Heart left ventricle (tissue), 16 donors: ENCODE measurements at regions of chr19 and their contacts with region 1.

Region 1: DNA sequence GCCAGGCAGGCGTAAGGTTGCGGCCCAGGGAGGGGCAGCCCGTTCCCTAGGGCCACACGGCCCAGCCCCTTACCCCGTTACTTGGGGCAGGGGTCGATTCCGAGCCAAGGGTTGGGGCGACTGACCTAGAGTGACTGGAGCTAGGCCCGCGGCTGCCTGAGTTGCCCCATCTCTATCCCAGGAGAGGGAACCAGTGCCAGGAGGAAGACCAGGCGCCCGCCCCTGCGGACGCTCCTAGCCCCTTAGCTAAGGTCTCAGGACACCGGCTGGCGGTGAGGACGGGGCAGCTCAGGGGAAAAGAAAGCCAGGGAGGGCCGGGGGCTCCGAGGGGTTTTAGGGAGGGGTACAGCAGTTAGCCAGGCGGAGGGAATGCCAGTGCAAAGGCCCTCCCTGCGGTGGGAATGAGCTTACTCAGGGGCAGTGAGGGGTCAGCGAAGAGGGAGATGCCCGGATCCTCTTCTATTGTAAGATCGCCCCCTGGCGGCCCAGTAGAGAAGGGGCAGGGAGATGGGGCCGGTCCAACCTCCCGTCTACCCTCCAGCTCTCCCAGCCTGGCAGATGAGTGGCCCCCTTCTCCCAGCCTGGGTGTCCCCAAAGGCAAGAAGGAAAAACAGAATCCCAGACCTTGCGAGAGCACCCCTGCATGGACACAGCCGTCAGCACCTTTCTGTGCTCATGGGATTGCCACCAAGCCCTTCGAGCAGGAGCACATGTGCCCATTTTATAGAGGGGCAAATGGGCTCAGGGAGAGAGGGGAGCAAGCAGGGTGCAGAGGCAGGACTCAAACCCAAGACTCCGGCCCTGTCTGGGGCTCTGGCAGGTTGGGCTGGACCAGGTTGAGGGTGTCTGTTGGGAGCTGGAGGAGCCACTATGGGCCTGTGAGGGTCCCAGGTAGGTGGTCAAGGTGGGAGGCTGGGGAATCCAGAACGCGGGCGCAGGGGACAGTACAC is 16.3 kb downstream of the CILP2 start:
- DNase-seq: peak in 2 of 5 donors; percentile 51 to 58
- ATAC-seq: peak in 3 of 4 donors; percentile 48 to 63 (median 48)
- H3K4me3 ChIP-seq: no peak overlapping the region
- H3K27ac ChIP-seq: no peak overlapping the region
- H3K4me1 ChIP-seq: peaks cover 0 to 9% (median 0%) of the 10 kb centered on the region in 12 donors
- H3K27me3 ChIP-seq: peaks cover 0 to 18% (median 0%) of the 10 kb centered on the region in 9 donors
- CTCF ChIP-seq: peak; percentile 58 to 88 (median 72)
- POLR2A ChIP-seq: no peak

Region 2: GRCh38 chr19:19578252-19578651 is 23.9 kb after region 1 on chr19:
- intact Hi-C with region 1: no loop called
- DNase-seq: no peak
- ATAC-seq: no peak
- H3K4me3 ChIP-seq: no peak overlapping the region
- H3K27ac ChIP-seq: no peak overlapping the region
- H3K4me1 ChIP-seq: no peaks in the 10 kb centered on the region
- H3K27me3 ChIP-seq: no peaks in the 10 kb centered on the region
- CTCF ChIP-seq: no peak
- POLR2A ChIP-seq: no peak

Region 3: DNA sequence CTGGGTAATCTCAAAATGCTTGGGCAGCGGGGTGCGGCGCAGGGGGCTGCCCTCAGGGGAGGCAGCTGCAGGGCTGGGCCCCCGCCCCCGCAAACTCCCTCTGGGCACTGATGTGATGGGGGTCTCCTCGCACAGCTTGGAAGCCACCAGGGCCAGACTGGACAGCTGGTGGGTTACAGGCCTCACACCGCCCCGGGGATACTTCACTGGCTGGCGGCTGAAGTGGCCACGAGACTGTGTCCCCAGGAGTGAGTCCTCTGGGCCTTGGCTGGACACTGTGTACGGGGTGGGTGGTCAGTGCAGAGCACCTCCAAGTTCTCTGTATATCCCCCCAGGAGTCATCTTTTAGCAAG is 75.7 kb after region 1 on chr19:
- intact Hi-C with region 1: loop called in 1 of 10 experiments (anchors 5 kb)
- DNase-seq: no peak
- ATAC-seq: no peak
- H3K4me3 ChIP-seq: no peak overlapping the region
- H3K27ac ChIP-seq: no peak overlapping the region
- H3K4me1 ChIP-seq: peaks cover 0 to 16% (median 10%) of the 10 kb centered on the region in 12 donors
- H3K27me3 ChIP-seq: peaks cover 0 to 27% (median 10%) of the 10 kb centered on the region in 9 donors
- CTCF ChIP-seq: no peak
- POLR2A ChIP-seq: no peak

Region 4: DNA sequence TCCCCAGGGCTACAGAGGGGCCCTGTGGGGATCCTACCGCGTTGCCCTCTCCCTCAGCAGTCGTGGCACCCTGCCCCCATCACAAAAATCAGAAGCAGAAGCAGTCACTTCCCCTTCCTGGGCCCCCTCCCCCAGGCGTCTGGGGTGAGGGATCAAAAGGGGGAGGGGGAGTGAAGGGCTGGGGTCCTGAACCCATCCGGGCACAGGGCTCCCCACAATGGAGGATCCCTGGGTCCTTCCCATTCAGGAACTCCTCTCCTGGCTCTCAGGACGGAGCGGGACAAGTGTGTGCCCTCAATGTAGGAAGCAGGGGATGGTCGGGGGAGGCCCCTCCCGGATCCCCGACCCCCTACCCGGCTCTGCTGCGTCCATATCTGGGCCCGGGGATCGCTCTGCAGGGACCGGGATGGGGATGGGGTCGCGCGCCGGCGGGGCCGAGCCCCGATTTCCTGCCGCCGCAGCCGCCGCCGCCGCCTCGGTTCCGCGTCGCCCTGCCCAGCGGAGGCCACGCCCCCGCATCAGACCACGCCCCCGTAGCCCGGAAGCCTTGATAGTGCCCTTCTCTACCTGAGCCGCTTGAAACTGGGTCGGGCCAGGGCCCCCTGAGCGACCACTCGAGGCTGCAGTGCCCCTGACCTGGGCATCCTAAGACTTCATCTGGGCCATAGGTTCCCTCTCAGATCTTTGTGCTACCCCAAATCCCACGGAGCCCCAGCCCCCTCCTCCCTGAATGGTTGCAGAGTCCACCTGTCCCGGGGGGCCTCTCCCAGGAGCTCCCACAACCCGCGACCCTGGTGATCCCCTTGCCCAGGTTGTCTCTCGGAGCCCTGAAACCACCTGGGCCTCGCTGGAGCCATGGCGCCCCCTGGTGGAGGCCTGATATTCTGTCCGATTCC is 89.1 kb after region 1 on chr19 and contains the start of gene GMIP:
- intact Hi-C with region 1: loop called in 1 of 10 experiments (anchors 5 kb)
- DNase-seq: peak; percentile 71 to 91 (median 81)
- ATAC-seq: peak; percentile 36 to 85 (median 82)
- H3K4me3 ChIP-seq: peak within 1 kb of the TSS; percentile 41 to 96 (median 77)
- H3K27ac ChIP-seq: peak within 1 kb of the TSS in 10 of 12 donors; percentile 6 to 96 (median 44)
- H3K4me1 ChIP-seq: peaks cover 0 to 15% (median 7%) of the 10 kb centered on the region in 12 donors
- H3K27me3 ChIP-seq: no peaks in the 10 kb centered on the region
- CTCF ChIP-seq: peak; percentile 81 to 93 (median 90)
- POLR2A ChIP-seq: peak in 1 of 2 donors; percentile 51
- total RNA-seq, gene GMIP: 1.1 to 21.7 (median 2.5) TPM